Activated CD4-positive, alpha-beta T cell treated with anti-CD3 and anti-CD28 coated beads for 36 hours (primary cell): ENCODE measurements at regions of chr14 and their contacts with region 1.

Region 1: GRCh38 chr14:24279301-24280186 is 8.1 kb upstream of the RABGGTA start:
- DNase-seq: peak; percentile 80
- ATAC-seq: peak; percentile 90
- H3K4me3 Mint-ChIP-seq: peak overlapping the region; percentile 34
- H3K27ac Mint-ChIP-seq: peak overlapping the region; percentile 89
- H3K4me1 Mint-ChIP-seq: peaks cover 52% of the 10 kb centered on the region
- H3K27me3 Mint-ChIP-seq: no peaks in the 10 kb centered on the region

Region 2: DNA sequence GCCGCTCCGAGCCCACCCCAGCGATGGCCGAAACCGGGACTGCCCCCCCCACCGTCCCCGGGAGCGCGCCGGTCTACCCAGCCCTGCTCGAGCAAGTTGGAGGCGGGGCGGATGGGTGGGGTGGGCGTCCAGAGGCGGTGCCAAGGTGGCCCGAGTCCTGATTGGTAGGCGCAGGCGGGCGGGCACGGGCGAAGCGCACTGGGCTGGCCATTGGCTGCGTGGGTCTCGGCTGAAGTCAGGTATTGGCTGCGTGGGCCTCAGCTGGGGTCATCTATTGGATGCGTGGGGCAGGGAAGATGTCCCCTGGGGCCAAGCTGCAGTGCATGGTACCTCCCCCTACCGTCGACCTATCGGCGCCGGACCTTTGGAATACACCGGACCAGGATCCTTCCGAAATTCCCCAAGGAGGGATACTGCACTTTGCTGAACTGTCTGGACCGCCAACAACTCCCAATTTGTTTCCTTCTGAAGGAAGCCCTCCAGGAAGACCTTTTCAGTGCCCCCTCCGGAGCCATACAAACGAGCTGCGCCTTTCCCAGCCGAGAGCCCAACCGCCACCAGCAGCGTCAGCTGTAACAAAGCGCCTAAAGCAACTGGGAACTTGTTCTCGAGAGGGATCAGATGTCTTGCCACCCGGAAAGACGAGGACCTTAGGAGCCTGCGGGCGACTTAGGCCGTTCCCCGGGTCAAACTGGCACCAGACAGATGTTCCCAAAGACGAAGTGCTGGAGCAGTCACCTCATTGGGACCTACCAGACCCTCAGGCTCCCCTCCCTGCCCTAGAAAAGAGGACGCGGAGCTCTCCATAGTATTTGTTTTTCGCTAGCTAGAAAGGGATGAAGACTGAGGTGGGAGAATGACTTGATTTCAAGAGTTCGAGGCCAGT is 993.3 kb before region 1 on chr14 and contains the start of gene HOMEZ:
- CTCF ChIA-PET with region 1: no interaction called
- POLR2A ChIA-PET with region 1: no interaction called
- intact Hi-C with region 1: no loop called
- DNase-seq: peak; percentile 99
- ATAC-seq: peak; percentile 98
- H3K4me3 Mint-ChIP-seq: peak within 1 kb of the TSS; percentile 99
- H3K27ac Mint-ChIP-seq: peak within 1 kb of the TSS; percentile 95
- H3K4me1 Mint-ChIP-seq: peaks cover 18% of the 10 kb centered on the region
- H3K27me3 Mint-ChIP-seq: no peaks in the 10 kb centered on the region
- total RNA-seq, gene HOMEZ: 13.7 to 17.5 TPM

Region 3: GRCh38 chr14:24264298-24264697 is 15.2 kb before region 1 on chr14:
- CTCF ChIA-PET with region 1: no interaction called
- POLR2A ChIA-PET with region 1: no interaction called
- intact Hi-C with region 1: no loop called
- DNase-seq: no peak
- ATAC-seq: no peak
- H3K4me3 Mint-ChIP-seq: no peak overlapping the region
- H3K27ac Mint-ChIP-seq: no peak overlapping the region
- H3K4me1 Mint-ChIP-seq: no peaks in the 10 kb centered on the region
- H3K27me3 Mint-ChIP-seq: no peaks in the 10 kb centered on the region

Region 4: GRCh38 chr14:24289649-24290249 is 10.2 kb after region 1 on chr14:
- CTCF ChIA-PET with region 1: interaction called, 36 read pairs
- POLR2A ChIA-PET with region 1: interaction called, 5 read pairs
- intact Hi-C with region 1: loop called (anchors 1 kb)
- DNase-seq: peak; percentile 88
- ATAC-seq: peak; percentile 99
- H3K4me3 Mint-ChIP-seq: peak overlapping the region; percentile 21
- H3K27ac Mint-ChIP-seq: peak overlapping the region; percentile 25
- H3K4me1 Mint-ChIP-seq: peaks cover 28% of the 10 kb centered on the region
- H3K27me3 Mint-ChIP-seq: no peaks in the 10 kb centered on the region

Region 5: GRCh38 chr14:24310646-24311604 is 31.4 kb after region 1 on chr14 and contains the start of gene LTB4R:
- CTCF ChIA-PET with region 1: interaction called, 32 read pairs
- POLR2A ChIA-PET with region 1: no interaction called
- intact Hi-C with region 1: no loop called
- DNase-seq: peak; percentile 81
- ATAC-seq: peak; percentile 83
- H3K4me3 Mint-ChIP-seq: peak within 1 kb of the TSS; percentile 70
- H3K27ac Mint-ChIP-seq: peak within 1 kb of the TSS; percentile 77
- H3K4me1 Mint-ChIP-seq: peaks cover 61% of the 10 kb centered on the region
- H3K27me3 Mint-ChIP-seq: no peaks in the 10 kb centered on the region
- total RNA-seq, gene LTB4R: 10.1 to 14.2 TPM